ENCODE measurements at regions of chr1 and their contacts with region 1.

Region 1: DNA sequence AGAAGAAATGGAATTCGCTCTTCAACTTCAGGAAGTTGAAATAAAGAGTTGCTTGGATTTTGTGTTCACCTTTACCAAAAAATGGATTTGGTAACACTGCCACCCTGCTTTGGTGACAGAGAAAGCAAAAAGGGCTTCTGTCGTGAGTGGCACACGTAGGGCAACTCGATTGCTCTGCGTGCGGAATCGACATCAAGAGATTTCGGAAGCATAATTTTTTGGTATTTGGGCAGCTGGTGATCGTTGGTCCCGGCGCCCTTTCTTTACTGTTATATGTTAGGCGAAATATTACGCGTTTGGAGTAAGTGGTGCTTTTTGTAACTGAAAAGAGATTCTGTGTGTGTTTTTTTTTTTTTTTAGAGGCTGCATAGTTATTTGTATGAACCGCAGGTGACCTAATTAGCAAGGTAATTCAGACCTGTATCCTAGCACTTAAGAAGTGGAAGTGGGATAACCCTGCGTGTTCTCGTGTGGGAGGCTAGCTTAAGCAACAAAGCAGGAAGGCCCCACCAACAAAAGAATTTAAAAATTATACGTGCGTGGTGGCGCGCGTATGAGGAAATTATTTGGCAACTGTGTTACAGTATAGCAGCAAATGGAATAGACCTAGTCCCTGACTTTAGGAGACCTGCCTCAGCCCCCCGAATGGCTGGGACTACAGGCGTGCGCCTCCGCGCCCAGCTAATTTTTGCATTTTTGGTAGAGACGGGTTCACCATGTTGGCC is at the start of gene RNU11:
- DNase-seq: peak; percentile 72 to 95
- H3K4me3 ChIP-seq: peak within 1 kb of the TSS; percentile 39 to 59
- H3K27ac ChIP-seq: peak within 1 kb of the TSS; percentile 85 to 89
- H3K4me1 ChIP-seq: peaks cover 3 to 19% of the 10 kb centered on the region in 2 donors
- H3K27me3 ChIP-seq: no peaks in the 10 kb centered on the region
- CTCF ChIP-seq: no peak
- total RNA-seq, gene RNU11: not detected

Region 2: DNA sequence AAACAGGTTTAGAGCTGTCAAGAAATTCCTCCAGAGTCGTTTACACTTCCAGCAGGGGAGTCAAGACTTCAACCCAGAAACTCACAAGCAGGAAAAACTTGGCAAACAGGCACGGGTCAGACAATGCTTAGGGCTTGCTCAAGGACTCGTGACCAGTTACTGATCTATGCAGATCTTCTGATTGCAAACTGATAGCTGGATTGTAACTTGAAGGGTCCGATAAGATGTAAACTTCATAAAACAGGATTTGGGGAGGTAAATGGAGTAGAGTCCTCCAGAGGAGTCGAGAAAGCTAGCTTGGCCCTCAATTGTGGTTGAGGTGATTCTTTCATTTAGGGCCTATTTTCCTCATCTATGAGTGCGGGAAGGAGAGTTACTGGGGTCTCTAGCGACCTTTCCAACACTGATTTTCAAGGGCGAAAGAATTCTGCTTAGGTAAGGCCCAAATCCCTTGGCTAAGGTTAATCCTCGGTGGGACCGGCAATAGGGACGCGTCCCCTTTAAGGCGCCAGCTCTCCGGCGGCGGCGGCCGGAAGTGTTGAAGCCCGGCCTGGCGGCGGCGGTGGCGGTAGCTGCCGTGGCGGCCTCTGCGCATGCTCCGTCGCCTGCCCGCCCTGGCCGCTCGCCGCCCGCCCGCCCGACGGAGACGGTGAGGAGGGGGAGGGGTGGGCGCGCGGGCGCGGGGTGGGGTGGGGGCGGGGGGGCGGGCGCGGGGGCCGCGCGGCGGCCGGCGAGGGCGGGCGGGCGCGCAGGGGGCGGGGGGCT is 19.7 kb after region 1 on chr1 and contains the start of gene GMEB1:
- intact Hi-C with region 1: loop called (anchors 1 kb)
- DNase-seq: peak; percentile 39 to 90
- H3K4me3 ChIP-seq: peak within 1 kb of the TSS; percentile 71 to 75
- H3K27ac ChIP-seq: peak within 1 kb of the TSS; percentile 94 to 100
- H3K4me1 ChIP-seq: peaks cover 0 to 12% of the 10 kb centered on the region in 2 donors
- H3K27me3 ChIP-seq: no peaks in the 10 kb centered on the region
- CTCF ChIP-seq: no peak
- total RNA-seq, gene GMEB1: 5.2 TPM